ENCODE measurements at regions of chr10 and their contacts with region 1.

Region 1: DNA sequence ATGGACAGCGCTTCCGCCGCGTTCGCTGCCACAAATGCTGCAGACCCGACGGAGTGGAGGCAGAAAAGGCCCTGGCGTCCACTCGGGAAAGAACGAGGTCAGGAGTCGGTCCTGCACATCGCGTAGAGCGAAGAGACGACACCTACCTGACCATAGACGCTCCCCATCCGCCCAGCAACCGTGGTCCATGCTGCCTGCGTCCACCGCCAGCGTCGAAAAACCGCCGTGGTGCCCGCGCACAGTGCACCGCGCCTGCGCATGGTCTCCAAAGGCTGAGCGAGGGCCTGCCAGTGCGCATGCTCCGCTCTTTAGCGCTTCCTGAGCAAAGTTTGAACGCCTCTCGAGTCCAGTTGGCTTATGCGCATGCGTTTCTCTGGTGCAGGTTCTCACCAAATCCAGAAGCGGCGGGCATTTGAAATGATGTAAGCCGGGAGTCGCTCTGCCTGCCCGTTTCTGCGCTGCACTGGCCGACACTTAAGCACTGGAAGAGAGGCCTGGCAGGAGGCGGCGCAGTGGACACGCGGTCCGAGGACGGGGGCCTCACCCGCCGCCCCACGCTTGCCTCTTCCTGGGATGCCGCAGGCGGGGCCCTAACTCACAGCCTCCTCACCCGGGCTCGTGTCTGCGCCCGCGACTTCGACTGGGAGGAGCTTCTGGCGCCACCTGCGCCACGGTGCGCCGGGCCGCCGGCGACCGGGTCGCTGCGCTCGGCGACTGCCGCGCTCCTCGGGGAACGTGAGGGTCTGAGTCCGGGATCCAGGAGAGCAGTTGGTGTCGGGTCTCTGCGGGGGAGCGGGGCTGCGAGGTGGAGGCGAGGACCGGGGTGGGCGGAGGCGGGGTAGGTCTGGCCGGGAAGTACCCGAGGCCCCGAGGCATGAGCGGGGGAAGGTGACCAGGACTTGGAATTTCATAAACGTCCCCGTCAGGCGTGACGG is at the start of gene FAM24B:
- DNase-seq: peak; percentile 96
- ATAC-seq: peak; percentile 87
- H3K4me3 Mint-ChIP-seq: peak within 1 kb of the TSS; percentile 97
- H3K27ac Mint-ChIP-seq: peak within 1 kb of the TSS; percentile 93
- H3K4me1 Mint-ChIP-seq: peaks cover 55% of the 10 kb centered on the region
- H3K27me3 Mint-ChIP-seq: no peaks in the 10 kb centered on the region
- CTCF ChIP-seq: no peak
- total RNA-seq, gene FAM24B: 9.0 to 10.6 TPM

Region 2: GRCh38 chr10:122953827-122954730 is 74.5 kb after region 1 on chr10 and contains the start of gene C10orf88:
- CTCF ChIA-PET with region 1: no interaction called
- POLR2A ChIA-PET with region 1: no interaction called
- intact Hi-C with region 1: loop called (anchors 2 kb)
- DNase-seq: peak; percentile 97
- ATAC-seq: peak; percentile 97
- H3K4me3 Mint-ChIP-seq: peak within 1 kb of the TSS; percentile 82
- H3K27ac Mint-ChIP-seq: peak within 1 kb of the TSS; percentile 77
- H3K4me1 Mint-ChIP-seq: peaks cover 24% of the 10 kb centered on the region
- H3K27me3 Mint-ChIP-seq: no peaks in the 10 kb centered on the region
- CTCF ChIP-seq: no peak
- total RNA-seq, gene C10orf88: 6.3 to 9.1 TPM